Naive thymus-derived CD4-positive, alpha-beta T cell (primary cell): ENCODE measurements at regions of chr11 and their contacts with region 1.

Region 1: DNA sequence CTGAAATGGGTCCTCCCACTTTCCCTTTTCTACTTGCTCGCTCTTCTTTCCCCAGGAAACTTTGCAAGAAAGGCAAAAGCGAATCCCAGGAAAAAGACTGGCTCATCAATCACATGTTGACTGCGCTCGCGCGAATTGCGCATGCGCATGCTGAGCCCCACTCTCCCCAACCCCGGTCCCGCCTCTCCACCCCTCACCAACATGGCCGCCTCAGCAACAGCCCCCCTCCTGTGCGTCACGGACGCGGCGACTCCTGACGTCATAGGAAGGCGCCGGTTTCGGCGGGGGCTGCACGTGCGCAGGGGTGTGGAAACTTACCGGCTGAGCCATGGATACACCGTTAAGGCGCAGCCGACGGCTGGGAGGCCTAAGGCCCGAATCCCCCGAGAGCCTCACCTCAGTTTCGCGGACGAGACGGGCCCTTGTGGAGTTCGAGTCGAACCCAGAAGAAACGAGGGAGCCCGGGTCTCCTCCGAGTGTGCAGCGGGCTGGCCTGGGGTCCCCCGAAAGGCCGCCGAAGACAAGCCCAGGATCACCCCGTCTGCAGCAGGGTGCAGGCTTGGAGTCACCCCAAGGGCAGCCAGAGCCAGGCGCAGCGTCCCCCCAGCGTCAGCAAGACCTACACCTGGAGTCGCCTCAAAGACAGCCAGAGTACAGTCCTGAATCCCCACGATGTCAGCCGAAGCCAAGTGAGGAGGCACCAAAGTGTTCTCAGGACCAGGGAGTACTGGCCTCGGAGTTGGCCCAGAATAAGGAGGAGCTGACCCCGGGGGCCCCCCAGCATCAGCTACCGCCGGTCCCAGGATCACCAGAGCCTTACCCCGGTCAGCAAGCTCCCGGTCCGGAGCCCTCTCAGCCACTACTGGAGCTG is at the start of gene CCDC86:
- DNase-seq: peak; percentile 96 to 100 (median 99)
- ATAC-seq: peak; percentile 99
- H3K4me3 ChIP-seq: peak within 1 kb of the TSS; percentile 93
- H3K4me3 Mint-ChIP-seq: peak within 1 kb of the TSS; percentile 89 to 95 (median 91)
- H3K27ac ChIP-seq: peak within 1 kb of the TSS; percentile 78
- H3K27ac Mint-ChIP-seq: peak within 1 kb of the TSS; percentile 87 to 99 (median 95)
- H3K4me1 ChIP-seq: peaks cover 26 to 35% of the 10 kb centered on the region in 2 donors
- H3K4me1 Mint-ChIP-seq: peaks cover 31 to 49% (median 44%) of the 10 kb centered on the region in 7 donors
- H3K27me3 ChIP-seq: no peaks in the 10 kb centered on the region
- H3K27me3 Mint-ChIP-seq: peaks cover 0 to 2% (median 0%) of the 10 kb centered on the region in 5 donors
- total RNA-seq, gene CCDC86: 9.1 to 26.2 (median 11.6) TPM

Region 2: DNA sequence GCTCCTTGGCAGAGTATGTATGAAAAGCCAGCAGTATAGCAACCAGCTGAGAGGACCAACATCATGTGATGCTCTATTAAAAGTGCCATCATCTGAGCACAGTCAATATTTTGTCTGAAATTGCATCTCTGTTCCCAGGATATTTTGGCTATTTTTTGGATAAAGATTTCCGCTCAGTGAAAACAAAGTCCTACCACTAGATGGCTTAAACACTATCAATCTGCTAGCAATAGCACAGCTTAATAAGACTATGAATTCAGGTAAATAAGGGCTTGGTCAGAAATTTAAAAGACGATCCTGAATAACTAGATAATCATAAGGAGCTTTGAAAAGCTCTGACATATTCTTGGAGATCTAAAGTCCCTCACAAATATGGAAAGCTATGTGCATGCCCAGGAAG is 252.4 kb before region 1 on chr11:
- CTCF ChIA-PET with region 1: no interaction called
- POLR2A ChIA-PET with region 1: no interaction called
- intact Hi-C with region 1: no loop called
- DNase-seq: no peak
- ATAC-seq: no peak
- H3K4me3 ChIP-seq: no peak overlapping the region
- H3K4me3 Mint-ChIP-seq: no peak overlapping the region
- H3K27ac ChIP-seq: no peak overlapping the region
- H3K27ac Mint-ChIP-seq: no peak overlapping the region
- H3K4me1 ChIP-seq: no peaks in the 10 kb centered on the region
- H3K4me1 Mint-ChIP-seq: no peaks in the 10 kb centered on the region
- H3K27me3 ChIP-seq: peaks cover 0 to 3% of the 10 kb centered on the region in 2 donors
- H3K27me3 Mint-ChIP-seq: peaks cover 0 to 14% (median 5%) of the 10 kb centered on the region in 5 donors

Region 3: DNA sequence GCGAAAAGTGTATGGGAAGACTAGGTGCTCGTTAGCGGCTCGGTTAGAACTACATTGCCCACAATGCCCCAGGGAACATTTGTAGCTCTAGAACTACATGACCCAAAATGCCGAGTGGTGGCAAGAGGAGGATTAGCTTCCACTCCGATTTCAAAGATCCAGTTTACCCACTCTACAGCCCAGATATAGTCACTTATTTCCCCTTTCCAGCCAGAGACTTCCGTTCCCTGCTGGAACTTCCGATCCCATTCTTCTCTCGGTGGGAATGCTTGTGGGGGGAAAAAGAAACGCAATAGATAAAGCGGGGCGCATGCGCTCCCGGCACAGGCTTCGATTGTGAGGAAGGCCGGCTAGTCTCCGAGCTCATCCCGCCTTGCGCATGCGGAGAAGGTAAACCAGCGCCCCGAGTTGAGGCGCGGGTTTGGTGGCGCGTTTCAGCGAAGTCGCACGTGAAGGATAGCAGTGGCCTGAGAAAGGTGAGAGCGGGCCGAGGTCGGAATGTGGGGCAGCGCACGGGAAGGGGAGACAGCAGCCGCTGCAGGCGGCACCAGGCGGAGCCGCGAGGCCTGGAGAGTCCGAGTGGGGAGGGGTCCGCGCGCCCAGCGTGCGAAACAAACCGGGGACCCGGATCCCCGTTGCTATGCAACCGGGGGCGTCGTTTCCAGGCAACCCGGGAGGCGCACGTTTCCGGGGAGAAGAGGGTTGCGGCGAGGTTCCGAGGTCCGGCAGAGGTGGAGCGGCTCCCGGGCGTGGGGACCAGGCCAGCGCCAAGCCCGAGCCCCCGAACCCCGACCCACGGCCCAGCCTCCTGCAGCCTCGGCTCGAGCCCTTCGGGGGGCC is 72.0 kb after region 1 on chr11 and contains the start of gene TMEM109:
- CTCF ChIA-PET with region 1: no interaction called
- POLR2A ChIA-PET with region 1: interaction called, 5 read pairs
- intact Hi-C with region 1: loop called in 1 of 2 experiments (anchors 1 kb)
- DNase-seq: peak; percentile 77 to 93 (median 91)
- ATAC-seq: peak; percentile 76
- H3K4me3 ChIP-seq: peak within 1 kb of the TSS; percentile 94
- H3K4me3 Mint-ChIP-seq: peak within 1 kb of the TSS; percentile 91 to 99 (median 98)
- H3K27ac ChIP-seq: peak within 1 kb of the TSS; percentile 94
- H3K27ac Mint-ChIP-seq: peak within 1 kb of the TSS; percentile 91 to 99 (median 97)
- H3K4me1 ChIP-seq: peaks cover 43 to 45% of the 10 kb centered on the region in 2 donors
- H3K4me1 Mint-ChIP-seq: peaks cover 39 to 77% (median 60%) of the 10 kb centered on the region in 7 donors
- H3K27me3 ChIP-seq: no peaks in the 10 kb centered on the region
- H3K27me3 Mint-ChIP-seq: peaks cover 0 to 11% (median 0%) of the 10 kb centered on the region in 5 donors
- total RNA-seq, gene TMEM109: 49.8 to 99.8 (median 56.9) TPM

Region 4: DNA sequence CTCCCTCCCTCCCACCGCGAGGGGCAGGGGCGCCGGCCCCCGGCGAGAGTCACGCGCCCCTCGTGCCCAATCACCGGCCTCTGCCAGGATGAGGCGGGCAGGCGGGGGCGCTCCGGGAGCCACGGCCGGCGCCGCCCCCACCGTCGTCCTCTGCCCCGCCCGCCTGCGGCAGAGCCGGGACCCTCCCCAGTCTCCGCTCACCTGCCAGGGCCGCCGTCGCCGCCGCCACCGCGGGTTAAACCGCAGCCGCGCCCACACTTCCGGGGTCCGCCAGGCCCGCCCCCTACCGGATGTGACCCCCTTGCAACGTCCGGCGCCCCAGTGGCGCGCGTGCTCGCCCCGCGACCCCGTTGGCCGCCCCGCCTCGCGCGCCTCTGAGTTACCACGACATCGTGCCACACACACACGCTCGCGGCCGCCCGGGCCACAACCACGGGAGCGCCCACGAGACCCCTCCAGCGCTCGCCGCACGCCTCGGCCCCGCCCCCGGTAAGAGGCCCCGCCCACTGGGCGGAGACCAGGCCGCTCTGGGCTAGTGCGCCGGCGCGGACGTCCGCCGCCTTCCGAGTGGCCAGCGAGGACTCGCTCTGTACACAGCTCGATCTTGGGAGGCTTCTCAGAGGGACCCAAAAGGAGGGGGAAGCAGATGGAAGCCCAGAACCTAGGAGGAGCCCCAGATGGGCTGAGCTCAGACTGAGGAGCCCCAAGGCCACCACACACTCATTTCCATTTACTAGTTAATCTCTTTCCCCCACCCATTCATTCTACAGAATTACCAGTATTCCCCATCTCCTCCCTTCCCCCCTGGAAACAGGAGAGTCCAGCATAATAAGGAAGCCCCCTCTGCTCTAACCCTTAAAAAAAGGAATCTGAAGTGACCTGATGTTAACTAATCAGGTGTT is 319.4 kb after region 1 on chr11 and contains the start of gene VPS37C:
- CTCF ChIA-PET with region 1: no interaction called
- POLR2A ChIA-PET with region 1: no interaction called
- intact Hi-C with region 1: loop called (anchors 1 to 2 kb)
- DNase-seq: peak; percentile 80 to 99 (median 87)
- ATAC-seq: peak; percentile 83
- H3K4me3 ChIP-seq: peak within 1 kb of the TSS; percentile 74
- H3K4me3 Mint-ChIP-seq: peak within 1 kb of the TSS; percentile 85 to 96 (median 90)
- H3K27ac ChIP-seq: peak within 1 kb of the TSS; percentile 78
- H3K27ac Mint-ChIP-seq: peak within 1 kb of the TSS; percentile 84 to 96 (median 94)
- H3K4me1 ChIP-seq: peaks cover 7 to 14% of the 10 kb centered on the region in 2 donors
- H3K4me1 Mint-ChIP-seq: peaks cover 31 to 62% (median 48%) of the 10 kb centered on the region in 7 donors
- H3K27me3 ChIP-seq: no peaks in the 10 kb centered on the region
- H3K27me3 Mint-ChIP-seq: no peaks in the 10 kb centered on the region
- total RNA-seq, gene VPS37C: 4.1 to 12.0 (median 7.9) TPM

Region 5: GRCh38 chr11:61187505-61188130 is 345.6 kb after region 1 on chr11:
- CTCF ChIA-PET with region 1: no interaction called
- POLR2A ChIA-PET with region 1: no interaction called
- intact Hi-C with region 1: no loop called
- DNase-seq: peak; percentile 48 to 76 (median 72)
- ATAC-seq: peak; percentile 96
- H3K4me3 ChIP-seq: no peak overlapping the region
- H3K4me3 Mint-ChIP-seq: no peak overlapping the region
- H3K27ac ChIP-seq: no peak overlapping the region
- H3K27ac Mint-ChIP-seq: peak overlapping the region in 1 of 9 donors; percentile 25
- H3K4me1 ChIP-seq: no peaks in the 10 kb centered on the region
- H3K4me1 Mint-ChIP-seq: peaks cover 0 to 5% (median 0%) of the 10 kb centered on the region in 7 donors
- H3K27me3 ChIP-seq: no peaks in the 10 kb centered on the region
- H3K27me3 Mint-ChIP-seq: peaks cover 0 to 13% (median 4%) of the 10 kb centered on the region in 5 donors

Region 6: DNA sequence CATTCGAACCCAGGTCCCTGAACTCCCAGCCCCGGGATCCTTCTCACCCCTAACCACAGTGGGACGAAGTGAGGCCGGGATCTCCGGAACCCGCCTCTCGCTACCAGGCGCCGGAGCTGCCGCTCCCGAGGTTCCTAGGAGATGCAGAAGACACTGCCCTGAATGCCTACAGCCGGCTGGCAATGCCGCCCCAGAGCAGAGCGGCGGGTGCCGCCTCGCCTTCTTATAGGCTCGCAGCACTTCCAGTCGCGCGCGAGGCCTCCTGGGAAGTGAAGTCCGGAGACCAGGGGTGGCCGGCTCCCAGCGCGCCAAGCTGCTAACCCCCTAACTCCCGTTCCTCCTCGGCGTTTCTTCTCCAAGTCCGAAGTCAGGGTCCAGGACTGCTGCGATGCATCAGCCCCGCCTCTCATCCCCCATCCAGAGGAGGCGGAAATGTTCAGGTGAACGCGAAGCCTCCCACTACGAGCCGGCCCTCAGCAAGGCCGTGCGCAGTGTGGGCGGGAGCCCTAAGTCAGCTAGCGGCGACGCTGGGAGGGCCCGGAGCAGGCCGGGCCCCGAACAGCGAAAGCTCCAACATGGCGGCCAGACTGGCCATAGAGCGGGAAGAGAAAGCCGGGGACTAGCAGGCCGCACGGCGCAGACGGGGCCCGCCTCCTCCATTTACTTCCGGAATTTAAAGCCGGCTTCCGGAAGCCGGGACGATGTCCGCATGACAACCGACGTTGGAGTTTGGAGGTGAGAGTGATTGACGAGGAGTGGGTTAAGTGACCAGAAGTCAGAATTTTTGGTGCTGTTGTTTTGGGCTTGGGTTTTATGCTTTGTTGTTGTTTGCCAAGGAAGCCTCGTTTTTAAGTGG is 519.9 kb after region 1 on chr11 and contains the starts of genes CYB561A3 and TMEM138:
- CTCF ChIA-PET with region 1: no interaction called
- POLR2A ChIA-PET with region 1: no interaction called
- intact Hi-C with region 1: loop called (anchors 1 to 5 kb)
- DNase-seq: peak; percentile 69 to 90 (median 81)
- ATAC-seq: peak; percentile 93
- H3K4me3 ChIP-seq: peak within 1 kb of the TSS; percentile 97
- H3K4me3 Mint-ChIP-seq: peak within 1 kb of the TSS; percentile 94 to 99 (median 98)
- H3K27ac ChIP-seq: peak within 1 kb of the TSS; percentile 95
- H3K27ac Mint-ChIP-seq: peak within 1 kb of the TSS; percentile 97 to 100 (median 99)
- H3K4me1 ChIP-seq: peaks cover 14 to 19% of the 10 kb centered on the region in 2 donors
- H3K4me1 Mint-ChIP-seq: peaks cover 30 to 55% (median 40%) of the 10 kb centered on the region in 7 donors
- H3K27me3 ChIP-seq: no peaks in the 10 kb centered on the region
- H3K27me3 Mint-ChIP-seq: no peaks in the 10 kb centered on the region
- total RNA-seq, gene CYB561A3: 37.9 to 47.6 (median 44.2) TPM
- total RNA-seq, gene TMEM138: 54.6 to 65.1 (median 59.9) TPM

Region 7: DNA sequence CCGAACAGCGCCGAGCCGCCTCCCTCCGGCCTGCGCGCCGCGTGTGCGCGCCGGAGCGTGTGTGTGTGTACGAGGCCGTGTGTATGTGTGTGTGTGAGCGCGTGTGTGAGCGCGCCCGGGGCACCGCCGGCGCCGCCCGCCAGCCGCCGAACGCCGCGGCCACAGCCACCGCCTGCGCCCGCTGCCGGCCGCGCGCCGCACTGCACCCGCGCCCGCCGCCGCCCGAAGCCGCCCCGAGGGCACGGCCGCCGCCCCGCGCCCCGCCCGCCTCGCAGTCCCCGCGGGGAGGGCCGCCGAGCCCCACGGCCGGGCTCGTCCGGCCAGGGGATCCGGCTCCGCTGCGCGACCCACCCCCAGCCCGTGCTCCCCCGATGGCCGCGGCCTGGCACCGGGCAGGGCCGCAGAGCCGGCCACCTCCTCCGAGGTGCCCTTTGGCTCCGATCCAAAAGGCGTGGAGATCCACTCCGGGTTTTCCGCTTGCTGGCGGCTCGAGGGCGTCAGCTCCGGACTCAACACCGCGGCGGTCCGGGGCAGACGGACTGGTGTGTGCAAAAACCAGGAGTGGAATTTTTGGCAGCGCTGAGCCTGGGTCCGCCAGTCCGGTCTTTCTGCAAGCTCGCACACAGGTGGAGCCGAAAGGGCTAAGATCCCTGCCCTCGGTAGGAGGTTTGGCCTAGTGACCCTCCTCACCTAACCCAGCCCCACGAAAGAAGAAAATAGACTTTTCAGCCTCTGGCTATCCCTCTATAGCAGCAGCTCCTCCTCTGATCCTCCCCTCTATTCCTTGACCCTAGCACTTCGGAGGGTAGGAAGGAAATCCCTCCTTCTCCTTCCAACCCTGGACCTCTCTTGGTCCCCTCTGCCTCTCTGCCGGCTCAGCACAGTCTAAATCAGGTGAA is 739.2 kb after region 1 on chr11 and contains the start of gene SYT7:
- CTCF ChIA-PET with region 1: no interaction called
- POLR2A ChIA-PET with region 1: no interaction called
- intact Hi-C with region 1: loop called in 1 of 2 experiments (anchors 2 kb)
- DNase-seq: peak; percentile 79 to 99 (median 96)
- ATAC-seq: peak; percentile 92
- H3K4me3 ChIP-seq: peak within 1 kb of the TSS; percentile 50
- H3K4me3 Mint-ChIP-seq: peak within 1 kb of the TSS; percentile 76 to 90 (median 86)
- H3K27ac ChIP-seq: no peak within 1 kb of the TSS
- H3K27ac Mint-ChIP-seq: peak within 1 kb of the TSS; percentile 3 to 88 (median 51)
- H3K4me1 ChIP-seq: peaks cover 5 to 12% of the 10 kb centered on the region in 2 donors
- H3K4me1 Mint-ChIP-seq: peaks cover 8 to 17% (median 10%) of the 10 kb centered on the region in 7 donors
- H3K27me3 ChIP-seq: peaks cover 3 to 18% of the 10 kb centered on the region in 2 donors
- H3K27me3 Mint-ChIP-seq: peaks cover 25 to 64% (median 32%) of the 10 kb centered on the region in 5 donors
- total RNA-seq, gene SYT7: 0.08 to 0.44 TPM in 2 of 5 experiments, not detected in the others